Pancreas (tissue), 10 donors: ENCODE measurements at regions of chr15 and their contacts with region 1.

Region 1: GRCh38 chr15:50003786-50004334 is 115.2 kb downstream of the ATP8B4 start:
- DNase-seq: peak; percentile 46 to 82 (median 68)
- ATAC-seq: peak; percentile 91 to 100 (median 98)
- H3K4me3 ChIP-seq: no peak overlapping the region
- H3K27ac ChIP-seq: no peak overlapping the region
- H3K4me1 ChIP-seq: peaks cover 0 to 3% (median 0%) of the 10 kb centered on the region in 3 donors
- H3K27me3 ChIP-seq: no peaks in the 10 kb centered on the region
- CTCF ChIP-seq: peak; percentile 31 to 50 (median 35)

Region 2: DNA sequence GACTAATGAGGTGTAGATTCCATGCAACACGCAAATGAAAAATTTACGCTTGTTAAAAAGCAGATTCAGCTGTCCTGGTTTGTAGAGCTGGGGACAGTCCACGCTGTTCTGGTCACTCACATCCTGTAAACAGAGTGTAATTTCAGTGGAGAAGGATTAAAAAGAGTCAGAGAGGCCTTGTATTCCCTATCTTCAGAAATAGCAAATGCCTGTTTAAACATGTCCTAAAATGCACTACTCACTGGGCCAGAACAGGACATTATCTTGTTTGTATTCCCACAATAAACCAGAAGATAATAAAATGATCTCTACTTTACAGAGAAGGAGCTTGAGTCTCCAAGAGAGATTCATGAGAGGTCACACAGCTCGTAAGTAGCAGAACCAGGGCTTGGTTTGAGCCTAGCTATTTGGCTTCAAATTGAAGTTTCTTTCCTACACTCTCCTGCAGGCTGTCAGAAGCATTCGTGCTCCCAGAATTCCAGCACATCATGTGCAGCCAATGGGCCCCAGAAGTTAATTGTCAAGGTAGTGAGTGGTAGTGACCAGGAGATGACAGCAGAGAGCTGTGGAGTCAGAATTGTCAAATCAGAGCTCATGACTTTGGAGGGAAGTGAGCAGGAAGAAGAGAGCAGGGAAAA is 127.3 kb before region 1 on chr15:
- intact Hi-C with region 1: loop called in 1 of 3 experiments (anchors 10 kb)
- DNase-seq: peak in 1 of 6 donors; percentile 28
- ATAC-seq: peak; percentile 81 to 89 (median 84)
- H3K4me3 ChIP-seq: no peak overlapping the region
- H3K27ac ChIP-seq: peak overlapping the region in 2 of 4 donors; percentile 7 to 23
- H3K4me1 ChIP-seq: no peaks in the 10 kb centered on the region
- H3K27me3 ChIP-seq: no peaks in the 10 kb centered on the region
- CTCF ChIP-seq: peak; percentile 18 to 39 (median 22)

Region 3: DNA sequence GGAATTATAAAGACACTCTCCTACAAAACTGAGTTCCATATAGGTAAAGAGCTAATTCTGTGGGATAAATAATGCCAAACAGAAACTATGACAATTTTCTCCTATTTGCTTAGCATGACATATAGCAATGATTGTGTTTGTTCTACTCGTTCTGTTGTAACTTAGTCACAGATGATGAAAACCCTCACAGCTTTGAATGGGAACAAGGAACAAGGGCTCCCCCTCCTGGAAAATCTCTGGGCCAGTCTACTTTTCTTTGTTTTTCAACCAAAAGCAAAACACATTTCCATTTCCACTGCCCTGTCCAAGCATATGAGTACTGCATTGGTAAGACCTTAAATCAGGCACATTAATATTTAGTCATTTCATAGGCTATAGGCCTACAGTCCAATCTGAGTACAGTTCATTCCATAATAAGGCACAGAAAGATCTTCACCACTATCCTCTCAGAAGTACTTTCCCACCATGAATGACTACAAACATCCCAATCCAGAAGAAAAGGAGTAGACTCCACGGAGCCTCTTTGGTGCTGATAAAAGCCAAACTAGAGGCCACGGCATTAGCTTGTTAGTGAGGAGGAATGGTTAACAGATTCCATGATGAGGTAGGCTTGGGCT is 48.1 kb after region 1 on chr15:
- intact Hi-C with region 1: no loop called
- DNase-seq: peak in 3 of 6 donors; percentile 13 to 55 (median 44)
- ATAC-seq: peak; percentile 70 to 91 (median 86)
- H3K4me3 ChIP-seq: no peak overlapping the region
- H3K27ac ChIP-seq: no peak overlapping the region
- H3K4me1 ChIP-seq: peaks cover 0 to 3% (median 0%) of the 10 kb centered on the region in 3 donors
- H3K27me3 ChIP-seq: no peaks in the 10 kb centered on the region
- CTCF ChIP-seq: peak in 3 of 4 donors; percentile 34 to 38 (median 35)